ENCODE measurements at regions of chr11 and their contacts with region 1.

Region 1: DNA sequence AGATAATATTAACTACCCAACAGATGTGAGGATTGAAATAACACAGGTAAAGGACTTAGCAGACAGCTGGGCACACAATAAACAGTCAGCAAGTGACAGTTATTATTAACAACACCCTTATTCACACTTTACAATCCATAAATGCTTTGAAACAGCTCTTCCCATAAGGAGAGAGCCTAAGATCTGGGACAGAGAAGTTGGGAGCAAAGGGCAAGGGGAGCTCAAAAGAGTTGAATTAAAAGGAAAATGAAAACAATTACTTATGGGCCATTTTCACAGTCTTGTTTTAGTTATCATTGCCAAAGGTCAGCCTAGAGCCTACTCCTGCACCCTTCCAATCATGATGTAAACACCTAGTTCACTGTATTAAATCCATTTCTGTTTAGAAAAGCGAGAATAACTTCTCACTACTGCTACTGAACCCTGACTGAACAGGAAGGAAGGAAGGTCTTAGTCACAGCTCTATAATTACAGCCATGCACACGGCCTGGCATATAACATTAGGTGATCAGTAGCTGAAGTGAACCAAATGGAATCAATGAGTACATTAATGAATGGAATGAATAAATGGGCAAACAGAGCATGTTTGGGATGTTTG is 111.3 kb downstream of the PLEKHA7 start:
- DNase-seq: peak; percentile 65
- ATAC-seq: peak; percentile 86
- H3K4me3 ChIP-seq: no peak overlapping the region; the same call in 1 of the 2 replicates
- H3K27ac ChIP-seq: peak overlapping the region; percentile 92
- H3K4me1 ChIP-seq: peaks cover 31% of the 10 kb centered on the region
- H3K27me3 ChIP-seq: no peaks in the 10 kb centered on the region
- CTCF ChIP-seq: no peak
- EP300 ChIP-seq: no peak
- POLR2A ChIP-seq: no peak
- RAD21 ChIP-seq: no peak

Region 2: DNA sequence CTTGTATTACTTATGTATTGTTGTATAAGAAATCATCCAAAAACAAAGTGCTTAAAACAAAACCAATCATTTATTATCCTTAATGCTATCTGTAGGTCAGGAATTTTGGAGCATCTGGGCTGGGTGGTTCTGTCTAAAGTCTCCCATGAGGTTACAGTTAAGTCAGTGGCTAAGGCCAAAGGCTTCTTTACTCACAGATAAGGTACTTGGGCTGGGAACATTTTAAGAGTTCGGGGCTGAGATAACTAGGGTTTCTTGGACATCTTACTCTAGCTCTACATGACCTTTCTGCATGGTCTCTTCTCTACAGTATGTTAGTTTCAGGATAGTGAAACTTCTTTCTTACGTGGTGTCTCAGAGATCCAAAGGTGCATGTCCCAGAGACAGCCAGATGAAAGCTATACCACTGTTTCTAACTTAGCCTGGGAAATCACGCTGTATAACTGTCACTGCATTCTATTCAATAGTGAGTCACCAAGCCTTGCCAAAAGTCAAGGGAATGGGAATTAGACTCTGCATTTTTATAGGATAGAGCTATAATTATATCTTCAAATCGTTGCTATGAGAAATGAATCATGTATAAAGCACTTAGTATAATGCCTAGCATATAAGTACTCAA is 576.1 kb before region 1 on chr11:
- CTCF ChIA-PET with region 1: no interaction called
- POLR2A ChIA-PET with region 1: no interaction called
- RAD21 ChIA-PET with region 1: no interaction called
- SMC1A ChIA-PET with region 1: no interaction called
- in situ Hi-C with region 1: no loop called
- intact Hi-C with region 1: no loop called
- DNase-seq: no peak
- ATAC-seq: no peak
- H3K4me3 ChIP-seq: no peak overlapping the region
- H3K27ac ChIP-seq: no peak overlapping the region
- H3K4me1 ChIP-seq: no peaks in the 10 kb centered on the region
- H3K27me3 ChIP-seq: no peaks in the 10 kb centered on the region
- CTCF ChIP-seq: no peak
- EP300 ChIP-seq: no peak
- POLR2A ChIP-seq: no peak
- RAD21 ChIP-seq: no peak

Region 3: DNA sequence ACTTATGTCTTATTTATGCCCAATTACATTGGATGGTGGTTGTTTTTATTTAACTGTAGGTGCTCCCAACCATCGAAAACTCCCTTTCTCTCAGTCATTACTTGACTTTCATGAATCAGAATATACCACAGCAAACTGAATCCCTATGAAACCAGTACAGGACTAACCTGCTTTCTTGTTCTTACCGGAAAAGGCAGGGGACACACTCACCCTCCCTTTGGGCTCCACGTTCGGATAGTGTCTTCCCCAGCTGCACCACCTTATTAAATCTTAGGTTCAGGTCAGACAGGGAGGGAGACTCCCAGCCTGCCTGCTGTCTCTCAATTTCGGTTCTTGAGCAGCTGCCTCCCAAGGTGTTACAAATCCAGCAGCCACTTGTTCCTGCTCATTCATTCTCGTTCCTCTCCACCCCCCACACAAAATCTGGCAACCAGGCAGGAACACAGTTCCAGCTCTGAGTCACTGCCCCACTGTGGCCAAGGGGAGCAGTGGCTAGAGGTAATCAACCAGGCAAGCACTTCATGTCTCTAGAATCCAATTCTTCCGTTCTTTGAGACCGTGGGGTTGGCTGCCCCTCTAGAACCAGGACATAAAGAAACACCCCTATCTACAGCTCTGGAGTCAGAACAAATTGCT is 21.7 kb before region 1 on chr11:
- CTCF ChIA-PET with region 1: interaction called, 10 read pairs
- POLR2A ChIA-PET with region 1: interaction called, 3 read pairs
- RAD21 ChIA-PET with region 1: interaction called, 4 read pairs
- SMC1A ChIA-PET with region 1: interaction called, 16 read pairs
- in situ Hi-C with region 1: no loop called
- intact Hi-C with region 1: no loop called
- DNase-seq: no peak
- ATAC-seq: peak; percentile 72
- H3K4me3 ChIP-seq: no peak overlapping the region
- H3K27ac ChIP-seq: no peak overlapping the region
- H3K4me1 ChIP-seq: peaks cover 3% of the 10 kb centered on the region; the same call in 1 of the 2 replicates
- H3K27me3 ChIP-seq: no peaks in the 10 kb centered on the region; a peak in 1 of 4 replicates
- CTCF ChIP-seq: peak in 1 of 3 experiments; percentile 21; a peak in 2 of 6 replicates
- EP300 ChIP-seq: no peak
- POLR2A ChIP-seq: no peak
- RAD21 ChIP-seq: peak; percentile 29

Region 4: GRCh38 chr11:16917941-16918340 is 15.1 kb after region 1 on chr11:
- CTCF ChIA-PET with region 1: interaction called, 17 read pairs
- POLR2A ChIA-PET with region 1: interaction called, 21 read pairs
- RAD21 ChIA-PET with region 1: interaction called, 30 read pairs
- SMC1A ChIA-PET with region 1: interaction called, 82 read pairs
- in situ Hi-C with region 1: no loop called
- intact Hi-C with region 1: no loop called
- DNase-seq: no peak
- ATAC-seq: no peak
- H3K4me3 ChIP-seq: no peak overlapping the region
- H3K27ac ChIP-seq: no peak overlapping the region
- H3K4me1 ChIP-seq: no peaks in the 10 kb centered on the region
- H3K27me3 ChIP-seq: no peaks in the 10 kb centered on the region
- CTCF ChIP-seq: no peak
- EP300 ChIP-seq: no peak
- POLR2A ChIP-seq: no peak
- RAD21 ChIP-seq: no peak

Region 5: GRCh38 chr11:16924826-16925560 is 22.1 kb after region 1 on chr11:
- CTCF ChIA-PET with region 1: interaction called, 17 read pairs
- POLR2A ChIA-PET with region 1: interaction called, 10 read pairs
- RAD21 ChIA-PET with region 1: interaction called, 30 read pairs
- SMC1A ChIA-PET with region 1: interaction called, 82 read pairs
- in situ Hi-C with region 1: no loop called
- intact Hi-C with region 1: no loop called
- DNase-seq: no peak
- ATAC-seq: peak; percentile 39
- H3K4me3 ChIP-seq: peak overlapping the region; percentile 64
- H3K27ac ChIP-seq: no peak overlapping the region
- H3K4me1 ChIP-seq: peaks cover 22% of the 10 kb centered on the region
- H3K27me3 ChIP-seq: peaks cover 12 to 13% of the 10 kb centered on the region in 2 experiments
- CTCF ChIP-seq: no peak
- EP300 ChIP-seq: no peak
- POLR2A ChIP-seq: no peak
- RAD21 ChIP-seq: no peak